ENCODE measurements at regions of chr2 and their contacts with region 1.

Region 1: GRCh38 chr2:11539317-11540152 is 5.7 kb downstream of the GREB1 start:
- DNase-seq: no peak
- H3K4me3 ChIP-seq: no peak overlapping the region
- H3K27ac ChIP-seq: no peak overlapping the region
- H3K4me1 ChIP-seq: peaks cover 13 to 38% (median 28%) of the 10 kb centered on the region in 4 experiments
- H3K27me3 ChIP-seq: no peaks in the 10 kb centered on the region
- CTCF ChIP-seq: no peak
- EP300 ChIP-seq: no peak
- POLR2A ChIP-seq: no peak
- RAD21 ChIP-seq: no peak

Region 2: GRCh38 chr2:11492720-11493119 is 46.8 kb before region 1 on chr2:
- CTCF ChIA-PET with region 1: interaction called, 31 read pairs
- POLR2A ChIA-PET with region 1: no interaction called
- DNase-seq: no peak
- H3K4me3 ChIP-seq: no peak overlapping the region
- H3K27ac ChIP-seq: no peak overlapping the region
- H3K4me1 ChIP-seq: peaks cover 0 to 12% (median 6%) of the 10 kb centered on the region in 4 experiments; a peak in 6 of 7 replicates
- H3K27me3 ChIP-seq: no peaks in the 10 kb centered on the region
- CTCF ChIP-seq: no peak
- EP300 ChIP-seq: no peak
- POLR2A ChIP-seq: no peak
- RAD21 ChIP-seq: no peak

Region 3: DNA sequence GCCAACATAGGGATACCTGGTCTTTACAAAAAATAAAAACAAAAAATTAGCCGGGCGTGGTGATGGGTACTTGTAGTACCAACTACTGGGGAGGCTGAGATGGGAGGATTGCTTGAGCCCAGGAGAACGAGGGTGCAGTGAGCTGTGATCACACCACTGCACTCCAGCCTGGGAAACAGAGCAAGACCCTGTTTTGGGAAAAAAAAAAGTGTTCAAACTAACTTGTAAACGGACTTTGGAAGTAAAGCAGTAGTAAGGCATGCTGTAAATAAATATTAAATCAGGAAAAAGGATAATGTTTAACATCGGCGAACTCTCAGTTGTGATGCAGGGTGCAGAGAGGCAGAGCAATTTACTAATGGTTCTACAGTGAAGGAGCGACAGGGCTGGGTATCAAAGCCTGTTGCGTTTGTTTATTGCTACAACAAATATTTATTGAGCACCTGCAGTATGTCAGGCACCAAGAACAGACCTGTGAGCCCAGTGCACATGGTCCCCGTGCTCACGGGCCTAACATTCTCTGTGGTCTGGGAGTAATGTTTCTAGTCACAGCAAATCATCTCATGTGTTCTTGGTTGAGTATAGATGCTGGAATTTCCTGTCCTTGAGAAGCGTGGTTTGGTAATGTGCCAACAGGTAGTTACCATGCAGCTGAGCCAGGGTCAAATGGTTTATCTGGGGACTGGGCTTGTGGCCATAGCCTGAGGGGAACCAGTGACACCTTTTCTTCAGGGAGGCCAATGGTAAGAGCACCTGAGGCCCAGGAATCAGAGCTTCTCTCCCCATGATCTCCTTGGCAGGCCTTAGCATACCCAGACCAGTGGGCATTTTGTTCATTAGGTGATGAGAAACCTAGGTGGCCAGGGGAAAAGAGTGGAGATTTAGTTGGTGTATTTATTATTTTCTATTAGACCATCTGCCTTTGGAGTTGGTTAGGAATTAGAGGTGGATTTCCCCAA is 33.6 kb before region 1 on chr2:
- CTCF ChIA-PET with region 1: interaction called, 31 read pairs
- POLR2A ChIA-PET with region 1: no interaction called
- DNase-seq: no peak
- H3K4me3 ChIP-seq: no peak overlapping the region
- H3K27ac ChIP-seq: no peak overlapping the region
- H3K4me1 ChIP-seq: peaks cover 0 to 1% (median 0%) of the 10 kb centered on the region in 4 experiments; a peak in 1 of 7 replicates
- H3K27me3 ChIP-seq: no peaks in the 10 kb centered on the region
- CTCF ChIP-seq: no peak
- EP300 ChIP-seq: no peak
- POLR2A ChIP-seq: no peak
- RAD21 ChIP-seq: no peak

Region 4: GRCh38 chr2:11527001-11527400 is 12.5 kb before region 1 on chr2:
- CTCF ChIA-PET with region 1: interaction called, 55 read pairs
- POLR2A ChIA-PET with region 1: interaction called, 3 read pairs
- DNase-seq: no peak
- H3K4me3 ChIP-seq: no peak overlapping the region
- H3K27ac ChIP-seq: no peak overlapping the region
- H3K4me1 ChIP-seq: peaks cover 0 to 7% (median 3%) of the 10 kb centered on the region in 4 experiments; a peak in 1 of 7 replicates
- H3K27me3 ChIP-seq: no peaks in the 10 kb centered on the region
- CTCF ChIP-seq: no peak
- EP300 ChIP-seq: no peak
- POLR2A ChIP-seq: no peak
- RAD21 ChIP-seq: no peak

Region 5: GRCh38 chr2:11564816-11565567 is 25.5 kb after region 1 on chr2:
- CTCF ChIA-PET with region 1: interaction called, 29 read pairs
- POLR2A ChIA-PET with region 1: interaction called, 3 read pairs
- DNase-seq: no peak
- H3K4me3 ChIP-seq: no peak overlapping the region
- H3K27ac ChIP-seq: no peak overlapping the region
- H3K4me1 ChIP-seq: no peaks in the 10 kb centered on the region; a peak in 1 of 7 replicates
- H3K27me3 ChIP-seq: no peaks in the 10 kb centered on the region
- CTCF ChIP-seq: no peak
- EP300 ChIP-seq: no peak
- POLR2A ChIP-seq: no peak
- RAD21 ChIP-seq: no peak

Region 6: DNA sequence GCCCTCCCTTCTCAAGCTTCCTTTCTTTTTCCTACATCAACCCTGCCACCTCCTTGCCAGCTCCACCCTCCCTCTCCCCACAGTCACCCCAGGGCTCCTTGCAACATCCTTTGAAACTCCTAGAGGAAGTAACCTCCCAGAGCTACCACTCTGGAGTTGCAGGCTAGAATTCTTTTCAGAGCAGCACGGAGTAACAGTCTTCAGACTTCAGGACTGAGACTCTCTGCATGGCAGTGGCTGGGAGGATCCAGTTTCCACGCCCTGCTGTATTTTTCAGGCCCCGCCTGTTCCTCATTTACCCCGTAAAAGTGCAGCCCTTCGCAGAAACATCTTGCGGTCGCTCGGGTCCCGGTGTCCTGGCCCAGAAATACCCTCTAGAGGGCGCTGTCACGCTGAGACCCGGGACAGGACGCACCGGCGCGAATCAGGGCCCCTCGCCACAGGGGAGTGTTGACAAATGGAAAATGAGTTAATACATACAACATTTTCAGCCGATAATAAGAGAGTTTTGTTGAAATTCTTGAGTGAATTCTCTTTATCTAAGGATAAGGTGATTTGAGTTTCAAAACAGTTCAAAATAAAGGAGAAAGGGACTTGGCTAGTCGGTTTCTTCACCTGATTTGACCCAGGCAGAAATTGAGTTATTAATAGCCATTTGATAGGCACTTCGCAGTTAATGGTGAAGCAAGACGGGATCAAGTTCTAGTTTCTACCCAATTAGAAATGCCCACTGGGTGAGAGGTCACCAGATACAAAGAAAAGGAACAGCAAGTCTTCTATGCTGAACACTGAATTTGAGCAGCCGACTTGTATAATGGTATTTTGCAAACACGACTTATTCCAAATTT is 148.9 kb after region 1 on chr2:
- CTCF ChIA-PET with region 1: no interaction called
- POLR2A ChIA-PET with region 1: no interaction called
- DNase-seq: peak in 1 of 2 experiments; percentile 94
- H3K4me3 ChIP-seq: peak overlapping the region in 3 of 4 experiments; percentile 25 to 49 (median 36); a peak in 5 of 8 replicates
- H3K27ac ChIP-seq: no peak overlapping the region
- H3K4me1 ChIP-seq: peaks cover 0 to 3% (median 0%) of the 10 kb centered on the region in 4 experiments; a peak in 2 of 7 replicates
- H3K27me3 ChIP-seq: peaks cover 0 to 2% (median 0%) of the 10 kb centered on the region in 4 experiments; a peak in 1 of 7 replicates
- CTCF ChIP-seq: peak; percentile 80 to 88 (median 82)
- EP300 ChIP-seq: no peak
- POLR2A ChIP-seq: no peak
- RAD21 ChIP-seq: peak; percentile 69 to 79